Right cardiac atrium (tissue), 5 donors: ENCODE measurements at regions of chrX and their contacts with region 1.

Region 1: GRCh38 chrX:23901805-23902204 is 5.9 kb downstream of the APOO start:
- DNase-seq: peak in 2 of 3 donors; percentile 27 to 61
- ATAC-seq: peak; percentile 88 to 94
- H3K4me3 ChIP-seq: peak overlapping the region; percentile 18
- H3K27ac ChIP-seq: peak overlapping the region; percentile 70
- H3K4me1 ChIP-seq: peaks cover 6% of the 10 kb centered on the region
- H3K27me3 ChIP-seq: no peaks in the 10 kb centered on the region

Region 2: GRCh38 chrX:23554304-23554703 is 347.5 kb before region 1 on chrX:
- intact Hi-C with region 1: no loop called
- DNase-seq: no peak
- ATAC-seq: no peak
- H3K4me3 ChIP-seq: no peak overlapping the region
- H3K27ac ChIP-seq: no peak overlapping the region
- H3K4me1 ChIP-seq: no peaks in the 10 kb centered on the region
- H3K27me3 ChIP-seq: no peaks in the 10 kb centered on the region

Region 3: GRCh38 chrX:23694606-23695005 is 207.2 kb before region 1 on chrX:
- intact Hi-C with region 1: loop called (anchors 5 to 10 kb)
- DNase-seq: peak; percentile 50 to 82 (median 75)
- ATAC-seq: peak; percentile 59 to 69
- H3K4me3 ChIP-seq: no peak overlapping the region
- H3K27ac ChIP-seq: no peak overlapping the region
- H3K4me1 ChIP-seq: no peaks in the 10 kb centered on the region
- H3K27me3 ChIP-seq: no peaks in the 10 kb centered on the region

Region 4: DNA sequence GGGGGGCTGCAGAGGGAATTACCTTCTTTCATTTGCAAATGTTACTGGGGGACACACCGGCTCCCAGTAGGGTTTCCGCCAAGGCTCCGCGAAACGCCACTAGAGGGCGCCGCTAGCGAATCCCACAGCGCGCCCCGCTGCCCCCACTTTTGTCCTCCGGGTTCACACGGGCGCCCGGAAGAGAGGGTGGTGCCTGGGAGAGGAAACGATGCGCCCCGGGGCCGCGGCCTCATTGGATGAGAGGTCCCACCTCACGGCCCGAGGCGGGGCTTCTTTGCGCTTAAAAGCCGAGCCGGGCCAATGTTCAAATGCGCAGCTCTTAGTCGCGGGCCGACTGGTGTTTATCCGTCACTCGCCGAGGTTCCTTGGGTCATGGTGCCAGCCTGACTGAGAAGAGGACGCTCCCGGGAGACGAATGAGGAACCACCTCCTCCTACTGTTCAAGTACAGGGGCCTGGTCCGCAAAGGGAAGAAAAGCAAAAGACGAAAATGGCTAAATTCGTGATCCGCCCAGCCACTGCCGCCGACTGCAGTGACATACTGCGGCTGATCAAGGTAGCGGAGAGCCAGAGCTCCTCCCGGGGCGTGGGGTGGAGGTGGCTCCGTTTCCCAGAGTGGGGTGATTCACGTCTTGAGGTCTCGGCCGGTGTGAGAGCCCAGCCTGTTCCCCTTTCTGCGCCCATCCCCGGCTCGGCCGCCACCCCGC is 118.8 kb before region 1 on chrX and contains the start of gene SAT1:
- intact Hi-C with region 1: loop called (anchors 2 to 5 kb)
- DNase-seq: peak; percentile 96 to 98 (median 98)
- ATAC-seq: peak; percentile 94 to 97
- H3K4me3 ChIP-seq: peak within 1 kb of the TSS; percentile 75
- H3K27ac ChIP-seq: peak within 1 kb of the TSS; percentile 99
- H3K4me1 ChIP-seq: peaks cover 1% of the 10 kb centered on the region
- H3K27me3 ChIP-seq: no peaks in the 10 kb centered on the region
- total RNA-seq, gene SAT1: 275 to 486 (median 317) TPM

Region 5: GRCh38 chrX:24395775-24396174 is 494.0 kb after region 1 on chrX:
- intact Hi-C with region 1: no loop called
- DNase-seq: no peak
- ATAC-seq: peak; percentile 81 to 86
- H3K4me3 ChIP-seq: no peak overlapping the region
- H3K27ac ChIP-seq: no peak overlapping the region
- H3K4me1 ChIP-seq: no peaks in the 10 kb centered on the region
- H3K27me3 ChIP-seq: no peaks in the 10 kb centered on the region